B cell (primary cell): ENCODE measurements at regions of chr15 and their contacts with region 1.

Region 1: GRCh38 chr15:56496635-56497034 is 31.7 kb upstream of the MNS1 start:
- DNase-seq: peak; percentile 69
- ATAC-seq: peak; percentile 63
- H3K4me3 ChIP-seq: no peak overlapping the region
- H3K4me3 Mint-ChIP-seq: peak overlapping the region; percentile 24
- H3K27ac ChIP-seq: no peak overlapping the region
- H3K27ac Mint-ChIP-seq: no peak overlapping the region
- H3K4me1 ChIP-seq: peaks cover 0 to 3% of the 10 kb centered on the region in 2 donors
- H3K4me1 Mint-ChIP-seq: peaks cover 3% of the 10 kb centered on the region
- H3K27me3 ChIP-seq: no peaks in the 10 kb centered on the region
- H3K27me3 Mint-ChIP-seq: no peaks in the 10 kb centered on the region
- CTCF ChIP-seq: peak; percentile 84

Region 2: GRCh38 chr15:56432304-56432703 is 64.3 kb before region 1 on chr15:
- CTCF ChIA-PET with region 1: no interaction called
- POLR2A ChIA-PET with region 1: no interaction called
- intact Hi-C with region 1: no loop called
- DNase-seq: no peak
- ATAC-seq: no peak
- H3K4me3 ChIP-seq: no peak overlapping the region
- H3K4me3 Mint-ChIP-seq: no peak overlapping the region
- H3K27ac ChIP-seq: no peak overlapping the region
- H3K27ac Mint-ChIP-seq: no peak overlapping the region
- H3K4me1 ChIP-seq: no peaks in the 10 kb centered on the region
- H3K4me1 Mint-ChIP-seq: no peaks in the 10 kb centered on the region
- H3K27me3 ChIP-seq: no peaks in the 10 kb centered on the region
- H3K27me3 Mint-ChIP-seq: no peaks in the 10 kb centered on the region
- CTCF ChIP-seq: no peak

Region 3: DNA sequence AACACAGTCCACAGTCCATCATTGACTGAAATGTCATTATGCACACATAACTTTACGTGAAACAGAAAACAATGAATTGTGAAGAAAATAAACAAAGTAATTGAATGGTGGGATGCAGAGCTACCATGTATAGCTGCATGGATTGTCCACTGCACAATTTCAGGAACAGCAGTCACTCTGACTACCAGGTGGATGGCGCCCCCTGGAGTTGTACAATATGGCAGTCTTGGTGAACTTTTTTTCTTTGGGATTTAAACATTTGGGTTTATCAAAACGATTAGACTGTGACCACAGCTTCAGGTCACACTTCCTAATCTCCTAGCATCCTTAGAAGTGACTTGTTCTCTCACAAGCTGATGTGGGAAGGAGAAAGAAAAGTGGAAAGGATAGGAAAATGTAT is 372.9 kb after region 1 on chr15:
- CTCF ChIA-PET with region 1: interaction called, 37 read pairs
- POLR2A ChIA-PET with region 1: no interaction called
- intact Hi-C with region 1: loop called (anchors 1 kb)
- DNase-seq: peak; percentile 38
- ATAC-seq: no peak
- H3K4me3 ChIP-seq: no peak overlapping the region
- H3K4me3 Mint-ChIP-seq: no peak overlapping the region
- H3K27ac ChIP-seq: no peak overlapping the region
- H3K27ac Mint-ChIP-seq: no peak overlapping the region
- H3K4me1 ChIP-seq: no peaks in the 10 kb centered on the region
- H3K4me1 Mint-ChIP-seq: peaks cover 6% of the 10 kb centered on the region
- H3K27me3 ChIP-seq: no peaks in the 10 kb centered on the region
- H3K27me3 Mint-ChIP-seq: no peaks in the 10 kb centered on the region
- CTCF ChIP-seq: peak; percentile 40

Region 4: DNA sequence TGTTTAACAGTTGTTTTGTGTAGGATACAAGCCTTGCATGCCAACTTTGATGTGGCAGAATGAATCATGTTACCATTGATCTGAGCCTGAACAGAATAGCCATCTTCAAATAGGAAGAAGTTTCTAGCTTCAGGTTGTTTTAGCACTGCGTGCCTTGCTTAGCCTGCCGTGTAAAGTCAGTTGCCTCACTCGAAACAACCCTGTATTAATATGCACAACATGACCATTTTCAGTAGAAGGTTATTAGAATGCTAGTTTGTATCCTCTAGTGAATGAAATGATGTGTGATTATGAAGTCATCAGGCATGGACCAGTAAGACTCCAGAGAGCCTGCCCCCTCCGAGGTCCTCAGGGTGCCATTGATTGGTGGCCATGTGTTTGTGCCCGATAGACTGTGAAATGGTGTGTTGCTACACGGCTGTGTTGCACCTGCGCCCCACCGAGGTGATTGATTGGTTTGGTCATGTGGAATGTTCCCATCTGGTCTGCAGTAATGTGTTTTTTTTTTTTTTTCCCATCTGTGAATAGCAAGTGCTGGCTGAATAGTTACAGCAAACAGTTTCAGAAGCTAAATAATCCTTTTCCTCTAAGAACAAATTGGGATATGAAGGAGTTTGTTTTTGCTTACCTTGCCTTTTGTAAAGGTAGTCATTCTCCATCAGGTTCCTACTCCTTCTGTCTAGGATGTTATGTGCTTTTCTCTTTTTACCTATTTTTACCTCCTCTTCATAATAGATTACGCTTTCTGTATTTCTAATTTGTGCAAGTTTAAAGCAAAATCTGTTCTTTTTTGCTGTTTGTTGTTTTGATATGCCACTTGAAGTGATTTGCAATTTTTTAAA is 636.7 kb after region 1 on chr15:
- CTCF ChIA-PET with region 1: no interaction called
- POLR2A ChIA-PET with region 1: no interaction called
- intact Hi-C with region 1: loop called (anchors 5 kb)
- DNase-seq: peak; percentile 43
- ATAC-seq: peak; percentile 49
- H3K4me3 ChIP-seq: no peak overlapping the region
- H3K4me3 Mint-ChIP-seq: peak overlapping the region; percentile 55
- H3K27ac ChIP-seq: no peak overlapping the region
- H3K27ac Mint-ChIP-seq: no peak overlapping the region
- H3K4me1 ChIP-seq: peaks cover 6 to 14% of the 10 kb centered on the region in 2 donors
- H3K4me1 Mint-ChIP-seq: peaks cover 36% of the 10 kb centered on the region
- H3K27me3 ChIP-seq: no peaks in the 10 kb centered on the region
- H3K27me3 Mint-ChIP-seq: no peaks in the 10 kb centered on the region
- CTCF ChIP-seq: no peak

Region 5: DNA sequence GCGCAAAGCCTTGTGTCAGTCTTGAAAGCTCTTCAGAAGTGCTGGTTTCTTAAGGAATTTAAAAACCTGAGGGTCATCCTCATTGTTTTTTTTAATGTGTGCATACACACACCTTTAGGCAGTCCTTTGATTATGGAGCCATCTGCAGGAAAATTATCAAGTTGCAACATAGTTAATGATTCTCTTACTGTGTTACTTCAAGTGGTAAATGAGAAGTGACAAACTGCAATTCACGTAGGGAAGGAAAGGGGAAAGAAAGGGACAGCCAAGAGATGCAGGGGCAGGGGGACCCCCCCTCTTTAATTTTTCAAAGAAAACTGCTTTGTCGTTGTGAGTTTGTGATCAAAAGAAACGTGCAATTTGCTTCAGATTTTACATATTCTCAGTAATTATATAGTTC is 717.2 kb after region 1 on chr15:
- CTCF ChIA-PET with region 1: interaction called, 27 read pairs
- POLR2A ChIA-PET with region 1: no interaction called
- intact Hi-C with region 1: no loop called
- DNase-seq: peak; percentile 57
- ATAC-seq: peak; percentile 39
- H3K4me3 ChIP-seq: no peak overlapping the region
- H3K4me3 Mint-ChIP-seq: no peak overlapping the region
- H3K27ac ChIP-seq: no peak overlapping the region
- H3K27ac Mint-ChIP-seq: peak overlapping the region; percentile 0
- H3K4me1 ChIP-seq: peaks cover 7 to 18% of the 10 kb centered on the region in 2 donors
- H3K4me1 Mint-ChIP-seq: peaks cover 31% of the 10 kb centered on the region
- H3K27me3 ChIP-seq: no peaks in the 10 kb centered on the region
- H3K27me3 Mint-ChIP-seq: no peaks in the 10 kb centered on the region
- CTCF ChIP-seq: peak; percentile 54

Region 6: DNA sequence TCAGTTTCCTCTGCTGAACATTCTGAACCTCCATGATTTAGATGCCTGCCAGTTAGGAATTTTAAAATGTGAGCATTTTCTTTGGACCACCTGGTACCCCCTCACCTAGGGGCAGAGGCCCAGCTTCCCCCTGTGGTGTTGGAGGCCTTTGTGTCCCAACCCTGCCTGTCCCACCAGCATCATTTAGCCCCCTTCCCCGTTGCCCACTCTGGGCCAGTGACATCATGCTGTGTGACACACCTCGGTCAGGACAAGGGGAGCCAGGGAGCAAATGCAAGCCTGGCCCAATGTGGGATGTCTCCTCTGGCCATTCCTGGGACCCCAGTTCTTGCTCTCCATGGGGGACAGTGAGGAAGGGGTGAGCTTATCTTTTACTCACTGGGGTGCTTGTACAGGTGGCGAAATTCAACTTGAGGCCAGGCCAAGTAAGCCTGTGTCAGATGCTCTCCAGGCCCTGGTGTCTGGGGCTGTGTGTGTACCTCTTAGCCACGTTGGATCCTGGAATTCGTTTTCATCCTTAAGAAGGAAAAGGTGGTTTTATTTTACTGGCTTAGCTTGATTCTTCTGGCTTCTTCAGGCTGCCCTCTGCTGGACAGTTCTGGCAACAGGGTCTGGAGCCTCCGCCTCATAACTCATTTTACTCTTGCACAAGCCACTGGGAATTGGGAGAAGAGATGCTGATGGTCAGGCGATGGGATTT is 1045.3 kb after region 1 on chr15:
- CTCF ChIA-PET with region 1: interaction called, 4 read pairs
- POLR2A ChIA-PET with region 1: no interaction called
- intact Hi-C with region 1: loop called (anchors 5 kb)
- DNase-seq: peak; percentile 58
- ATAC-seq: no peak
- H3K4me3 ChIP-seq: no peak overlapping the region
- H3K4me3 Mint-ChIP-seq: no peak overlapping the region
- H3K27ac ChIP-seq: no peak overlapping the region
- H3K27ac Mint-ChIP-seq: no peak overlapping the region
- H3K4me1 ChIP-seq: no peaks in the 10 kb centered on the region
- H3K4me1 Mint-ChIP-seq: no peaks in the 10 kb centered on the region
- H3K27me3 ChIP-seq: peaks cover 0 to 5% (median 0%) of the 10 kb centered on the region in 4 experiments
- H3K27me3 Mint-ChIP-seq: peaks cover 41% of the 10 kb centered on the region
- CTCF ChIP-seq: peak; percentile 79